ENCODE measurements at regions of chr11 and their contacts with region 1.

Region 1: GRCh38 chr11:76419896-76420295 is 24.9 kb upstream of the EMSY start:
- H3K4me3 ChIP-seq: no peak overlapping the region
- H3K27ac ChIP-seq: no peak overlapping the region
- H3K4me1 ChIP-seq: no peaks in the 10 kb centered on the region
- CTCF ChIP-seq: no peak

Region 2: DNA sequence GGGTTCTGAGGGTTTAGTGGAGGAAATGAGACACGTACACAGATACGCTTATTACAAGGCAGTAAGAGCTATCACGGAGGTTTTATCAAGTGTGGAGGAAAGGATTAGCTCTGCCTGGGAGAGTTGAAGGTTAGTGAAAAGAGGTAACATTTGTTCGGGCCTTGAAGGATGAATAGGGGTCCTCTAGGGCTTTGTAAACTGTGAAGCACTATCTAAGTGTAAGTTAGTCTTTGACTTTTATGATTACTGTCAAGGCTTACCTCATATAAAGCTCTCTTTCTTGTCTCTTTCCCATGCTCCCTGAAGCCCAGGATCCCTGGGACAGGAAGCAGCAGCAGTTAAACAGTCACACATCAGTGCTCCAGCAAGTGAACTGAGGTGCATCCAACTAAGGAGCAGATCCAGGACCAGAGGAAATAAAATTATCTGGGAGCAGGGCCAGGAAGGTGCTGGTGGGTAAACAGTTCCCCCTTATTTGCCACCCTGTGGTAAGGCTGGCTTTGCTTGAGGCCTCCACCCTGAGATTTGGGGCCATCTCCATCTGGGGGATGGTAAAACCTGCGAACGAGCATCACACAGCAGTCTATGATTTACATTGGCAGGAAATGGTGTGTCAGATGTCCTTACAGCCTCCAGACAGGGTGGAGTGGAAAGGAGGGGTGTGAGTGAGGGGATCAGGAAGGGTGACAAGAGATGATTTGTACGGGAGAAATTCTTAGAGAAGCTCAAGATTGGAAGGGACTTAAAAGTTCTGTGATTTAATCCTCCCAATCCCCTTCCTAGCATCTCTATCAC is 11.5 kb before region 1 on chr11:
- CTCF ChIA-PET with region 1: interaction called, 18 read pairs
- POLR2A ChIA-PET with region 1: no interaction called
- H3K4me3 ChIP-seq: no peak overlapping the region
- H3K27ac ChIP-seq: no peak overlapping the region
- H3K4me1 ChIP-seq: no peaks in the 10 kb centered on the region
- CTCF ChIP-seq: no peak